Dorsolateral prefrontal cortex (tissue), 120 donors: ENCODE measurements at regions of chr1 and their contacts with region 1.

Region 1: DNA sequence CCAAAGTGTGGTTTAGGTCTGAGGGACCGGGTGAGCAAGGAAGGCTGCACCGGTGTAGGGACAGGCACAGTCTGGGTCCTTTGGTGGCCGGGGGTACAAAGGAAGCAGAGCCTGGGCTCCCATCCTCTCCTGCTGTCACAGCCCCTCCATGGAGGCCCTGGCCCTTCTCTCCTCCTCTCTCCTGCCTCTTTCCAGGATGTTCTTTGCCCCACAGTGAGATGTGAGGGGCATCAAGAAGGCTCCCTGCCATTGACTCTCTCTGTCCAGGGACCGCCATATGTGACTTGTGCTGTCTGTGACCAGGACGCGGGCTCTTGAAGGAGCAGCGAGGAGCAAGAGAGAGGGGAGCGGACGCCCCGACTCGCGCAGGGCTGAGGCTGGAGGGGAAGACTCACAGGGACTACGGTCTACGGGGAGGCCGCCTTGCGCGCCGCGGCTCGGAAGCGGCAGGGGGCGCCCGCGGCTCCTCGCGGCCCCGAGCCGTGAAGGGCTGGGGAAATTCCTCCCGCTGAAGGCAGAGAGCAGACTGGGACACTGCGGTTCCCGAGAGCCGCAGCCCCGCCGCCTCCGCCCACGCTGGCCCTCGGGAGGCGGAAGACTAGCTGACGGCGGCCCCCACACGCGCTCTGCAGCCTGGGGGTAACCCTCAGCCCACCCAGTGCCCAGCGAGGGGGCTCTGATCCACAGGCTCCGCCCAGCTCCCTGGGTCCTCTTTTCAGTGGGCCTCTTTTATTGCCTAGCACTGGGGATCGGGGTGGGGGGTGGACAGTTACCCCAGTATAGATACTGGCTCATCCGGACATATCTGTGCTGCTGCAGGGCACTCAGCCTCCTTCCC is 40.8 kb downstream of the MAB21L3 start:
- DNase-seq: peak in 9 of 10 donors; percentile 60 to 88 (median 76)
- H3K4me3 ChIP-seq: peak overlapping the region; percentile 29 to 73 (median 59)
- H3K27ac ChIP-seq: peak overlapping the region; percentile 66 to 97 (median 88)
- H3K27me3 ChIP-seq: no peaks in the 10 kb centered on the region
- CTCF ChIP-seq: peak; percentile 71 to 98 (median 94)

Region 2: GRCh38 chr1:116168277-116169097 is 16.5 kb after region 1 on chr1:
- intact Hi-C with region 1: loop called in 1 of 2 experiments (anchors 1 kb)
- DNase-seq: peak in 9 of 10 donors; percentile 53 to 90 (median 76)
- H3K4me3 ChIP-seq: peak overlapping the region; percentile 36 to 80 (median 66)
- H3K27ac ChIP-seq: peak overlapping the region; percentile 59 to 96 (median 87)
- H3K27me3 ChIP-seq: no peaks in the 10 kb centered on the region
- CTCF ChIP-seq: peak; percentile 83 to 99 (median 97)

Region 3: DNA sequence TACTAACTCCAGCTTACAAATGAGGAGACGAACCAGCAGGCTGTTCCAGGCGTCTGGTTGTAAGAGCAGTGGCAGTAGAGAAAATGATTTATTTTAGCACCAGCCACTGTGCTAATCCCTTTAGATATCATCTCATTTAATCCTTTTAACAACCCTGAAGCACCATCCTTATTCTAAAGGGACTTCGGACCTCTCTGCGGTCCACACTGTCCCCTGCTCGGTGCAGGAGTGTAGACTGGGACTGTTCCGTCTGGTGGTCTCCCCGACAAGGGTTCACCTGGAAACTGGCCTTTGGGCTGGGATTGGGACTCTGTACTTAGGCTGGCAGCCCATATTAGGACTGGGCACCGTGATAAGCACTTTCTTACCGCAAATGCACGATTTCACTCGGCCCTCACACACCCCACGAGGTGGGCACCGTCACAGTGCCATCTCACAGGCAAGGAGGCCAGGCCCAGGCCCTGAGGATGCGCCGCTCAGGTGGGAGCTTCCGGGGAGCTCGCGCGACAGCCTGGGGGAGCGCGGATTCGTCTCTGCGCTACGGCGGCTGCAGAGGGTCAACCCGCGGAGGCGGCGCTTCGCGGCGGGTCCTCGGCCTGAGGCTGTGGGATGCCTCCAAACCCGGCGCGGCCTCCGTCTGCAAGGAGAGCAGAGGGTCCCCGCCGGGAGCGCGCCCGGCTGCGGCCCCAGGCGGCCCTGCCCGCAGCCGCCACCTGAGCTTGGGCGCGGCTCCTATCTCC is 266.3 kb after region 1 on chr1:
- intact Hi-C with region 1: loop called in 1 of 2 experiments (anchors 5 kb)
- DNase-seq: peak; percentile 70 to 89 (median 76)
- H3K4me3 ChIP-seq: peak overlapping the region; percentile 60 to 95 (median 82)
- H3K27ac ChIP-seq: peak overlapping the region; percentile 48 to 98 (median 94)
- H3K27me3 ChIP-seq: no peaks in the 10 kb centered on the region
- CTCF ChIP-seq: peak in 40 of 56 donors; percentile 7 to 55 (median 36)

Region 4: DNA sequence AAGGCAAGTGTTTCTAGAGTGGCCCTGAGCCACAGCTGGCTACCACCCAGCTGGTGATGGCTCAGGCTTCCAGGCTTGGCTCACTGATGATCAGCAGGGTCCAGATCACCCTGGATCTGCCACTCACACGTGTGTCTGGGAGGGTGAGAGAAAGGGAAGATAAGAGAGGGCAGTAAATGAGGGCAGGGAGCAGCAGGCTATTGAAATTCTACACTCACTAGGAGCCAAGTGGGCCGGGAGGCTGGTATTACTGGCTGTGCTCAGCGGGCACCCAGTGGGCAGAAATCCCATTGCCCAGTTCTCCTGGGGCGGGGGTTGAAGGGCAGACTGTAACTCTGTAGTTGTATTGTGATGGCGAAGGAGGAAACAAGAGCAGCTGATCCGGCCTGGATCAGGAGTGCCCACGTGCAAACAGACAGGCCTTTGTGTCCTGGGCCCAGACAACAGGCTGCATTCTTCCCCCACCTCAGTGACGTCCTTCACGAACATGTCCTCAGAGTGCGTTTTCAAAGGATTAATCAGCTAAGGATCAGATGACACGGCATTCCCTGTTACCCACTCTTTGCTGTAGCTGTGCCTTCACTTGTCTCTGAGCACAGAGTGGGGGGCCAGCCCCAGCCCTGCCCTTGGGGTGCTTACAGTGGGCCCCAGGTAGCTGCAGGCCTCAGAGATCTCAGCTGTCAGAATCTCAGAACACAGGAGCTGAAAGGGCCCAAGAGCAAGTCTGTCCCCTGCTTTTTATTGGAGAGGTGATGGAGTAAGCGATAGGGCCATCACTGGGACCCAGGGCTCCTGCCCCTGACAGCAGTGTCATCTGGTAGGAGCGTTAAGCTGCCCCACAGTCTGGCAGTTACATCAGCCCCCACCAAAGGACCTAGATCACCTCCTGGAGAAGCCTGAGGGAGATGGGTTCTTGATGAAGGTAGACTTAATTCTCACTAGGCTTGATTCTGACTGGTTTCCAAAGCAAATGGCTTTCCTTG is 281.6 kb after region 1 on chr1:
- intact Hi-C with region 1: loop called in 1 of 2 experiments (anchors 5 kb)
- DNase-seq: peak; percentile 58 to 97 (median 92)
- H3K4me3 ChIP-seq: peak overlapping the region in 8 of 59 donors; percentile 8 to 30 (median 22)
- H3K27ac ChIP-seq: peak overlapping the region; percentile 80 to 99 (median 95)
- H3K27me3 ChIP-seq: no peaks in the 10 kb centered on the region
- CTCF ChIP-seq: peak in 12 of 56 donors; percentile 2 to 32 (median 17)